IMR-90 (cell line): ENCODE measurements at regions of chr17 and their contacts with region 1.

Region 1: DNA sequence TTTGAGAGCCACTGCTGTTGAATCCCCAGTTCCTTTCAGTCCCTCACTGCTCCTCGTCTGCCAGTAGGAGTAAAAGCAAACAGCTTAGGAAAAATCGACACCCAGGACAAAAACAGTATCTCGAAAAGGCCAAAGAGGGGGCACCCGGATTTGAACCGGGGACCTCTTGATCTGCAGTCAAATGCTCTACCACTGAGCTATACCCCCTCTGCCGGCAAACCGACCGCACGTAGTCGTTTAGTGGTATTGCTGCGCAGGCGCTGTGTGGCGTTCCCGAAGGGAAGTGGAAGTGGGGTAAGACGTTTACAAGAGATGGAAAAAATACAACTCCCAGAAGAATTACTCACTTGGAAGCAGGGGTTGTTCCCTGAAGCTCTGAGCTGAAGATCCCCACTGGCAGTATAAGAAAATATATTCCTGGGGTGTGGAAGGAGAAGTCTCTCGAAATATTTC is 2.2 kb upstream of the PLXDC1 start:
- DNase-seq: peak; percentile 88
- ATAC-seq: peak; percentile 69
- H3K4me3 ChIP-seq: peak overlapping the region; percentile 74
- H3K27ac ChIP-seq: peak overlapping the region; percentile 43; the same call in 1 of the 2 replicates
- H3K4me1 ChIP-seq: peaks cover 2% of the 10 kb centered on the region
- H3K27me3 ChIP-seq: peaks cover 20% of the 10 kb centered on the region
- CTCF ChIP-seq: peak; percentile 15; the same call in 1 of the 2 replicates
- POLR2A ChIP-seq: no peak
- RAD21 ChIP-seq: peak; percentile 28; the same call in 1 of the 2 replicates

Region 2: DNA sequence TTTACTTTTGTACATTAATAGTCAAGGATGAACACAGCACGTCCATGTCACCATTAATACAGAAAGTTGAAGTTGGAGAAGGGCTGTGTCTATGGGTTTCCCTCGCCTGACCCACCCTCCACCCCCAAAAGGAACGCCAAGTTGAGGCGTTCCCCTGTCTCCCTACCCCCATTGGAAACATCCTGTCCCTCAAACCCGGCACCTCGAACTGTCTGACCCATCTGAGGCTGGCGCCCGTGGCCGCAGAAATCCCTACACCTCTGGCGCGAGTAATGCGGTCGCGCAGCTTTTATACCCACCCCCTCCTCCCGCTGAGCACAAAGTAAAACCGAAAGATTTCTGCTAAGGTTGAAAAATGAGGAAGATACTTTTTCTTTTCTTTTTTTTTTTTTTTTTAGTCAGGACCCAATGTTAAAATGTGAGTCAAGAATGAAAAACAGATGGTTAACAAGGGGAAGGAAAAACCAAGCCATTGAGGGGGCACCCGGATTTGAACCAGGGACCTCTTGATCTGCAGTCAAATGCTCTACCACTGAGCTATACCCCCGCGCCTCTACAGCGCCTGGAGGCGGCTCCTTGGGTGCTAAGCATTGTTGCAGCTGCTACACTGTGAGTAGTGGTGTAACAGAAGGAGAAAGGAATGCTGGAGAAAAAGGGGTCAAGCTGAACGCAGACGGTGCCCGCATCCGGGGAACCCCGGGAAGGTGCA is 284.7 kb before region 1 on chr17:
- CTCF ChIA-PET with region 1: no interaction called
- POLR2A ChIA-PET with region 1: no interaction called
- dilution Hi-C with region 1: no loop called
- in situ Hi-C with region 1: no loop called
- intact Hi-C with region 1: loop called (anchors 1 kb)
- DNase-seq: peak; percentile 88
- ATAC-seq: peak; percentile 27
- H3K4me3 ChIP-seq: peak overlapping the region; percentile 90
- H3K27ac ChIP-seq: peak overlapping the region; percentile 90
- H3K4me1 ChIP-seq: peaks cover 24% of the 10 kb centered on the region
- H3K27me3 ChIP-seq: no peaks in the 10 kb centered on the region
- CTCF ChIP-seq: peak; percentile 42
- POLR2A ChIP-seq: no peak; the same call in none of the 2 replicates
- RAD21 ChIP-seq: no peak

Region 3: DNA sequence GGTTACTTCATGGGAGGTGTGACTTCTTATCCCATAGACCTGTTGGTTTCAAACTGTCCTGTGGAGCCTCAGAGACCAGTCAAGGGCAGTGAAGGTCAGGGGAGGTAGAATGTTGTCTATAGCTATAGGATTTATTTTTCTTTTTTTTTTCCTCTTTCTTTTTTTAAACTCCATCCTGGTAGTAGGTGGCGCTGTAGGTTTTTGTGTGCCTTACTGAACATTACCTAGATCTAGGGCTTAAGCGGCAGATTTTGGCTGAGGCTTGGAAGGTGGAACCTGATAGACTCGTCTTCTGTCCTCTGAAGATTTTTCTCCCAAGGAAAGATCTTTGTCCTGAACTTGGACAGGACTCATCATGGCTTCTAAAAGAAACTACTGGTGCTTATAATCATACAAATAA is 236.4 kb before region 1 on chr17:
- CTCF ChIA-PET with region 1: no interaction called
- POLR2A ChIA-PET with region 1: no interaction called
- dilution Hi-C with region 1: no loop called
- in situ Hi-C with region 1: no loop called
- intact Hi-C with region 1: loop called (anchors 2 kb)
- DNase-seq: no peak
- ATAC-seq: no peak
- H3K4me3 ChIP-seq: no peak overlapping the region
- H3K27ac ChIP-seq: no peak overlapping the region
- H3K4me1 ChIP-seq: peaks cover 10% of the 10 kb centered on the region; the same call in 1 of the 2 replicates
- H3K27me3 ChIP-seq: no peaks in the 10 kb centered on the region
- CTCF ChIP-seq: 0 out of 2 replicates have a peak, but pooled peaks have one; percentile 8
- POLR2A ChIP-seq: no peak
- RAD21 ChIP-seq: no peak

Region 4: GRCh38 chr17:39069114-39069756 is 84.4 kb before region 1 on chr17:
- CTCF ChIA-PET with region 1: interaction called, 6 read pairs
- POLR2A ChIA-PET with region 1: no interaction called
- dilution Hi-C with region 1: no loop called
- in situ Hi-C with region 1: loop called (anchors 5 kb)
- intact Hi-C with region 1: loop called (anchors 1 kb)
- DNase-seq: peak; percentile 54
- ATAC-seq: peak; percentile 93
- H3K4me3 ChIP-seq: no peak overlapping the region
- H3K27ac ChIP-seq: no peak overlapping the region
- H3K4me1 ChIP-seq: peaks cover 6% of the 10 kb centered on the region
- H3K27me3 ChIP-seq: peaks cover 29% of the 10 kb centered on the region
- CTCF ChIP-seq: peak; percentile 82
- POLR2A ChIP-seq: no peak
- RAD21 ChIP-seq: peak; percentile 78

Region 5: DNA sequence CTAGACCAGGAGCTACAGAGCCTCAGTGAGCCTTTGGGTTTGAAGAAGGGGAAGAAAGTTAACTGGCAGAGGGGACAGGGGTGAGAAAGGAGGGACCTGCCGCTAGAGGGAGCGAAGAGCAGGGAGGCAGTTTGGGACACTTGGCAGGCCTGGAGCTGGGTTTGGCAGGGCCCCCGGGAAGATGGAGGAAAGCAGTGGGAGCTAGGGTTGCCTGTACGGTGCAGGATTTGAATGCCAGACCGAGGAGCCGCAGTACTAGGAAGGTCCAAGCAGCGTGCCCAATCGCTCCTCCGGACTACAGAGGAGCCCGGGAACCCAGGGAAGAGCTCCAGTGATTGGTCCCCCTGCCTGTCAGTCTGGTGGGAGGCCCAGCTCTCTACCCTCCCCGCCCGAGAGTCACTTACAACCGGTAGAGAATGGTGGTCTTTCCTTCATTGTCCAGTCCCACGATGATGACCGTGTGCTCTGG is 11.1 kb after region 1 on chr17:
- CTCF ChIA-PET with region 1: interaction called, 14 read pairs
- POLR2A ChIA-PET with region 1: no interaction called
- dilution Hi-C with region 1: no loop called
- in situ Hi-C with region 1: no loop called
- intact Hi-C with region 1: no loop called
- DNase-seq: peak; percentile 89
- ATAC-seq: peak; percentile 96
- H3K4me3 ChIP-seq: peak overlapping the region; percentile 55
- H3K27ac ChIP-seq: no peak overlapping the region
- H3K4me1 ChIP-seq: peaks cover 5% of the 10 kb centered on the region; the same call in 1 of the 2 replicates
- H3K27me3 ChIP-seq: peaks cover 35% of the 10 kb centered on the region
- CTCF ChIP-seq: peak; percentile 86
- POLR2A ChIP-seq: no peak
- RAD21 ChIP-seq: peak; percentile 59

Region 6: DNA sequence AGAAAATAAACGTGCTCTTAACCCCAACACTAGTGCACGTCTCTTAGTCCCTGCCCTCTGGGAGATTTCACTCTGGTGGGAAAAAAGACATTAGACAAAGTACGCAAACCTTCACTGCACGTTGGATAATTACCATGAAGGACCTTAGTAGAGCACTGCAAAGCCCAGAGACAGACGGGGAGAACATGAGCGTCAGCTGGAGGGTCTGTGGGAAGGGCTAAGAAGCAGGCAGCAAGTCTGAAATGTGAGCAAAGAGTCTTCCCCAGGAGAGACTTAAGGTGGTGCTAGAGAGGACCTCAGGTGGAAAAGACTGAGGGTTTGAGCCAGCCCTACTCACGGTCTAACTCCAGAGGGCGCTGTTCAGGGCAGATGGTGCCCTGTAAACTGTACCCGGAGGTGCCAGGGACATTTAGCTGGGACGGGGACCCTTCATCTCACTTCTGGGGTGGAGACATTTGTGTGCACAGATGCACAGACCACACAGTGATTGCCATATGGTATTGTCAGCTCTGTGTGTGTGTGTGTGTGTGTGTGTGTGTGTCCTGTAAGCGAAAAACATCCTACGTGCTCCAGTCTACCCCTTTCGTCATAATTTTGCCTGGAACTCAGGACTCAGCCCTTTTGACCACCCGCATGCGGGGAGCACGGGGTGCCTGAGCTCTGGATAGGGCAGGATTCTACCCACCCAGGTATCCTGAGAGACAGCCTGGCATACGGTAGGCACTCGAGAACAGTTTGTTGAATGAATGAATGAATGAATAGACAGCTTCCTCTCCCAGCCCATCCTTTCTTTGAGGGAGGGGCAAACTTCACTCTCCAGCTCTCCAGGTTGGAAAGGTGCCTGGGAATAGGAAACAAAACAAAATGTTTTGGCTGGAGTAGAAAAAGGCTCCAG is 82.2 kb after region 1 on chr17:
- CTCF ChIA-PET with region 1: no interaction called
- POLR2A ChIA-PET with region 1: interaction called, 11 read pairs
- dilution Hi-C with region 1: no loop called
- in situ Hi-C with region 1: no loop called
- intact Hi-C with region 1: no loop called
- DNase-seq: peak; percentile 57
- ATAC-seq: peak; percentile 21; the same call in 1 of the 2 replicates
- H3K4me3 ChIP-seq: no peak overlapping the region
- H3K27ac ChIP-seq: no peak overlapping the region
- H3K4me1 ChIP-seq: peaks cover 3% of the 10 kb centered on the region; the same call in 1 of the 2 replicates
- H3K27me3 ChIP-seq: peaks cover 7% of the 10 kb centered on the region
- CTCF ChIP-seq: peak; percentile 88
- POLR2A ChIP-seq: no peak
- RAD21 ChIP-seq: peak; percentile 26

Region 7: GRCh38 chr17:39408360-39408759 is 254.7 kb after region 1 on chr17:
- CTCF ChIA-PET with region 1: no interaction called
- POLR2A ChIA-PET with region 1: no interaction called
- dilution Hi-C with region 1: no loop called
- in situ Hi-C with region 1: no loop called
- intact Hi-C with region 1: no loop called
- DNase-seq: no peak
- ATAC-seq: no peak
- H3K4me3 ChIP-seq: no peak overlapping the region
- H3K27ac ChIP-seq: no peak overlapping the region
- H3K4me1 ChIP-seq: peaks cover 6% of the 10 kb centered on the region
- H3K27me3 ChIP-seq: no peaks in the 10 kb centered on the region
- CTCF ChIP-seq: no peak
- POLR2A ChIP-seq: no peak
- RAD21 ChIP-seq: no peak